Activated naive CD4-positive, alpha-beta T cell treated with anti-CD3 and anti-CD28 coated beads for 36 hours (primary cell): ENCODE measurements at regions of chr6 and their contacts with region 1.

Region 1: GRCh38 chr6:26216356-26216885 is 129.2 kb downstream of the HFE start:
- DNase-seq: peak; percentile 85
- H3K4me3 Mint-ChIP-seq: no peak overlapping the region
- H3K27ac Mint-ChIP-seq: no peak overlapping the region
- H3K4me1 Mint-ChIP-seq: peaks cover 2% of the 10 kb centered on the region
- H3K27me3 Mint-ChIP-seq: no peaks in the 10 kb centered on the region

Region 2: DNA sequence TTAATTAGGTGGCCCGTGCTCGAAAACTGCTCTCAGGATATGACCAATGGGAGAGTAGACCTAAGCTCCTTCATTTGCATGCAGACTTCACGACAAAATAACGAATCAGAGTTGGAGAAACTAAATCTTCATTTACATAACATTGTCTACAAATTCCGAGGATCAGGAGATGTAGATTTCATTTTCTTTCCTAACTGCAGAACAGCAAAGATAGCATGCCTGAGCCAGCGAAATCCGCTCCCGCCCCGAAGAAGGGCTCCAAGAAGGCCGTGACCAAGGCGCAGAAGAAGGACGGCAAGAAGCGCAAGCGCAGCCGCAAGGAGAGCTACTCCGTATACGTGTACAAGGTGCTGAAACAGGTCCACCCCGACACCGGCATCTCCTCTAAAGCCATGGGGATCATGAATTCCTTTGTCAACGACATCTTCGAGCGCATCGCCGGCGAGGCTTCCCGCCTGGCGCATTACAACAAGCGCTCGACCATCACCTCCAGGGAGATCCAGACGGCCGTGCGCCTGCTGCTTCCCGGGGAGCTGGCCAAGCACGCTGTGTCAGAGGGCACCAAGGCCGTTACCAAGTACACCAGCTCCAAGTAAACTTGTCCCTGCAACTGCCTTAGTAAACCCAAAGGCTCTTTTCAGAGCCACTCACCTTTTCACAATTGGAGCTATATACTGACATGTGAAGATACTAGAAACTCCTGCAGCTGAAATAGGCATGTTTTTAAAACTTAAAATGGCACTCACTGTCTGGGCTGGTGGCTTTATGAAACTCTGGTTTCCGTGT is 32.6 kb before region 1 on chr6:
- CTCF ChIA-PET with region 1: no interaction called
- intact Hi-C with region 1: loop called (anchors 1 kb)
- DNase-seq: peak; percentile 73
- H3K4me3 Mint-ChIP-seq: peak overlapping the region; percentile 86
- H3K27ac Mint-ChIP-seq: peak overlapping the region; percentile 89
- H3K4me1 Mint-ChIP-seq: peaks cover 30% of the 10 kb centered on the region
- H3K27me3 Mint-ChIP-seq: no peaks in the 10 kb centered on the region

Region 3: GRCh38 chr6:26196846-26197648 is 19.4 kb before region 1 on chr6:
- CTCF ChIA-PET with region 1: interaction called, 5 read pairs
- intact Hi-C with region 1: loop called (anchors 2 kb)
- DNase-seq: peak; percentile 86
- H3K4me3 Mint-ChIP-seq: peak overlapping the region; percentile 96
- H3K27ac Mint-ChIP-seq: peak overlapping the region; percentile 99
- H3K4me1 Mint-ChIP-seq: peaks cover 36% of the 10 kb centered on the region
- H3K27me3 Mint-ChIP-seq: peaks cover 5% of the 10 kb centered on the region

Region 4: GRCh38 chr6:26204332-26205165 is 11.9 kb before region 1 on chr6:
- CTCF ChIA-PET with region 1: interaction called, 13 read pairs
- intact Hi-C with region 1: loop called (anchors 1 kb)
- DNase-seq: peak; percentile 94
- H3K4me3 Mint-ChIP-seq: no peak overlapping the region
- H3K27ac Mint-ChIP-seq: no peak overlapping the region
- H3K4me1 Mint-ChIP-seq: peaks cover 20% of the 10 kb centered on the region
- H3K27me3 Mint-ChIP-seq: no peaks in the 10 kb centered on the region

Region 5: DNA sequence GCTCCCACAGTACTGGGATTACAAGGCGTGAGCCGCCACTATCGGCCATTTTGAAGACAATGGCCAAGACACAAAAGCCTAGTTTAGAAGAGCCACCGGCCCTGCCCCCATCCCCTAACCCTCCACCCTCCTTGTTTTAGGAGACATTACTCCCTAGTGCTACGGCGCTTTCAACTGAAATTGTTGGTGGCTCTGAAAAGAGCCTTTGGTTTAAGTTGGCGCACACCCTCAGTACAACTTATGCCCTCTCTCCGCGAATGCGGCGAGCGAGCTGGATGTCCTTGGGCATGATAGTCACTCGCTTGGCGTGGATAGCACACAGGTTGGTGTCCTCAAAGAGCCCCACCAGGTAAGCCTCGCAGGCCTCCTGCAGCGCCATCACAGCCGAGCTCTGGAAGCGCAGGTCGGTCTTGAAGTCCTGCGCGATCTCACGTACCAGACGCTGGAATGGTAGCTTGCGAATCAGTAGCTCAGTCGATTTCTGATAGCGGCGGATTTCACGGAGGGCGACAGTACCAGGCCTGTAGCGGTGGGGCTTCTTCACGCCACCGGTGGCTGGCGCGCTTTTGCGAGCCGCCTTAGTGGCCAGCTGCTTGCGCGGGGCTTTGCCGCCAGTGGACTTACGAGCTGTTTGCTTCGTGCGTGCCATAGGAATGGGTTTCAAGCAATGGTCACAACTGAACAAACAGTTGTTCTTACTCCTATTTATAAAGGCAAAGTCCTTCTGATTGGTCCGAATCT is 33.7 kb after region 1 on chr6:
- CTCF ChIA-PET with region 1: interaction called, 7 read pairs
- intact Hi-C with region 1: loop called (anchors 1 kb)
- DNase-seq: peak; percentile 82
- H3K4me3 Mint-ChIP-seq: peak overlapping the region; percentile 86
- H3K27ac Mint-ChIP-seq: peak overlapping the region; percentile 100
- H3K4me1 Mint-ChIP-seq: peaks cover 17% of the 10 kb centered on the region
- H3K27me3 Mint-ChIP-seq: no peaks in the 10 kb centered on the region